Activated CD4-positive, alpha-beta memory T cell treated with anti-CD3 and anti-CD28 coated beads for 36 hours (primary cell): ENCODE measurements at regions of chr15 and their contacts with region 1.

Region 1: GRCh38 chr15:63945007-63945788 is 101.1 kb downstream of the DAPK2 start:
- DNase-seq: peak; percentile 82
- H3K4me3 Mint-ChIP-seq: no peak overlapping the region
- H3K27ac Mint-ChIP-seq: no peak overlapping the region
- H3K4me1 Mint-ChIP-seq: peaks cover 7% of the 10 kb centered on the region
- H3K27me3 Mint-ChIP-seq: no peaks in the 10 kb centered on the region

Region 2: GRCh38 chr15:63922261-63922904 is 22.8 kb before region 1 on chr15:
- CTCF ChIA-PET with region 1: interaction called, 24 read pairs
- POLR2A ChIA-PET with region 1: no interaction called
- intact Hi-C with region 1: no loop called
- DNase-seq: no peak
- H3K4me3 Mint-ChIP-seq: no peak overlapping the region
- H3K27ac Mint-ChIP-seq: no peak overlapping the region
- H3K4me1 Mint-ChIP-seq: peaks cover 14% of the 10 kb centered on the region
- H3K27me3 Mint-ChIP-seq: no peaks in the 10 kb centered on the region

Region 3: DNA sequence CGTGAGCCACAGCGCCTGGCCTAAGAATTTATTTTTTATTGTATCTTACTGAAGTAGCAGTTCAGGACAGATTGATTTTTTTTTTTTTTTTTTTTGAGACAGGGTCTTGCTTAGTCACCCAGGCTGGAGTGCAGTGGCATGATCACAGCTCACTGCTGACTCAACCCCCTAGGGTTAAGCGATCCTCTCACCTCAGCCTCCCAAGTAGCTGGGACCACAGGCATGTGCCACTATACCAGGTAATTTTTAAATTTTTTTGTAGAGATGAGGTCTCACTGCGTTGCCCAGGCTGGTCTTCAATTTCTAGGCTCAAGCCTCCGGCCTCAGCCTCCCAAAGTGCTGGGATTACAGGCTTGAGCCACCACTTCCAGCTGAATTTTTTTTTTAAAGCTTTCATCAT is 11.7 kb before region 1 on chr15:
- CTCF ChIA-PET with region 1: interaction called, 25 read pairs
- POLR2A ChIA-PET with region 1: no interaction called
- intact Hi-C with region 1: no loop called
- DNase-seq: peak; percentile 40
- H3K4me3 Mint-ChIP-seq: no peak overlapping the region
- H3K27ac Mint-ChIP-seq: no peak overlapping the region
- H3K4me1 Mint-ChIP-seq: peaks cover 9% of the 10 kb centered on the region
- H3K27me3 Mint-ChIP-seq: no peaks in the 10 kb centered on the region

Region 4: DNA sequence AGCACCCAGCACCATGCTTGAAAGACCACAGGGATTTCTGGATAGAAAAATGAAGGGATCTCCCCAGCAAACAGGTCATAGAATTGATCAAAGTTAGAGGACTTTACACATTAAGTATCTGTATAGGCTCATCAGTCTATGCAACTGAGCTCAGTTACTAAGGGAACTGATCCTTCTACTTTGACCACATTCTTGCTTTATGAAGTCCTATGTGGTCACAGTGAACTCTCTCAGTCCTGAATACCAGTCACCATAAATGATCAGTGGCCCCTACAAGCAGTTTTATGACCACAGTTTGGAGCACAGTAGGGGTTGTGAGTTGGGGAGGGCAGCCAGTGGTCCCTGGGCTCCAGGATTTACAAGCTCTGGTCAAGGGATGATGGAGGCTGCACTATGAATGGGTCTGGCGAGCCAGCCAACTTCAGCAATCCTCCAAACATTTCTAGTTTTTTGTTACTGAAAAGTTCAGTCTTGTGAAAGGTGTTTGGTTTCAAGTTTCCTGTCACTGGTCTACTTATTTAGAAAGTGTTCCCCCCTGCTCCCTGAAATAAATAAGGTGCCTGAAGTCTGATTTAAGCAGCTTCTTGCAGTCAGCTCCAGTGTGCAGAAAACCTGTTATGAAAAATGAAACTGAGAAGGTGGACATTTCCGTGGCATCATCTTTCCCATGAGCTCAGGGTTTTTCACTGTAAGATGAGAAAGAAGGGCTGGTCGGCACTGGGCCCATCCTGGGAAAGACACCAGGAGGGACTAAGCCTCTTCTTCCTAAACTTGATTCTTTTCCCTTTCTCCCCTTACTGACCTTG is 25.6 kb after region 1 on chr15:
- CTCF ChIA-PET with region 1: interaction called, 26 read pairs
- POLR2A ChIA-PET with region 1: no interaction called
- intact Hi-C with region 1: no loop called
- DNase-seq: peak; percentile 61
- H3K4me3 Mint-ChIP-seq: peak overlapping the region; percentile 35
- H3K27ac Mint-ChIP-seq: peak overlapping the region; percentile 89
- H3K4me1 Mint-ChIP-seq: peaks cover 36% of the 10 kb centered on the region
- H3K27me3 Mint-ChIP-seq: peaks cover 1% of the 10 kb centered on the region

Region 5: GRCh38 chr15:64067564-64068030 is 122.4 kb after region 1 on chr15:
- CTCF ChIA-PET with region 1: interaction called, 35 read pairs
- POLR2A ChIA-PET with region 1: no interaction called
- intact Hi-C with region 1: no loop called
- DNase-seq: peak; percentile 73
- H3K4me3 Mint-ChIP-seq: no peak overlapping the region
- H3K27ac Mint-ChIP-seq: peak overlapping the region; percentile 38
- H3K4me1 Mint-ChIP-seq: peaks cover 4% of the 10 kb centered on the region
- H3K27me3 Mint-ChIP-seq: no peaks in the 10 kb centered on the region